T-cell (primary cell): ENCODE measurements at regions of chr15 and their contacts with region 1.

Region 1: DNA sequence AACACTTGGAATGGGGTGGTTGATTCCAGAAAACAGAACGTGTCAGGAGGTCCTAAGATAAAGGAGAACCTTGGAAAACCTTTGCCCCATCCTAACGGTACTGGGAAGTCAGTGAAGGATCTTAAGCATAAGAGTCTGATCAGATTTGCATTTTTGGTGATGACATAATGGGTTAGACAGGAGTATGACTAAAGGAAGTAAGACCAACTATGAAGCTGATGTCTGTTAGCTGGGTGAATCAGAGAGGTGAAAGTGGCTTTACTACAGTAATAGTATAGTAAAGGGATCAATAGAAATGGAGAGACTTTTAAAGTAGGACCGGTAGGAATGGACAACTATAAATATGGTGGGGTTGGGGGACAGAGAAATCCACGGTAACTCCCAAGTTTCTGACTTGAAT is 12.6 kb downstream of the GTF2A2 start:
- DNase-seq: no peak
- ATAC-seq: no peak
- H3K4me3 ChIP-seq: no peak overlapping the region
- H3K4me3 Mint-ChIP-seq: no peak overlapping the region
- H3K27ac ChIP-seq: no peak overlapping the region
- H3K27ac Mint-ChIP-seq: no peak overlapping the region
- H3K4me1 ChIP-seq: no peaks in the 10 kb centered on the region
- H3K4me1 Mint-ChIP-seq: peaks cover 0 to 3% (median 1%) of the 10 kb centered on the region in 3 donors
- H3K27me3 ChIP-seq: no peaks in the 10 kb centered on the region
- H3K27me3 Mint-ChIP-seq: no peaks in the 10 kb centered on the region

Region 2: GRCh38 chr15:58918239-58918638 is 726.5 kb before region 1 on chr15:
- CTCF ChIA-PET with region 1: no interaction called
- POLR2A ChIA-PET with region 1: interaction called in 1 of 2 experiments, 12 read pairs
- DNase-seq: no peak
- ATAC-seq: no peak
- H3K4me3 ChIP-seq: no peak overlapping the region
- H3K4me3 Mint-ChIP-seq: no peak overlapping the region
- H3K27ac ChIP-seq: no peak overlapping the region
- H3K27ac Mint-ChIP-seq: no peak overlapping the region
- H3K4me1 ChIP-seq: peaks cover under 1 to 16% of the 10 kb centered on the region in 2 experiments
- H3K4me1 Mint-ChIP-seq: peaks cover 22 to 49% (median 38%) of the 10 kb centered on the region in 3 donors
- H3K27me3 ChIP-seq: no peaks in the 10 kb centered on the region
- H3K27me3 Mint-ChIP-seq: no peaks in the 10 kb centered on the region

Region 3: DNA sequence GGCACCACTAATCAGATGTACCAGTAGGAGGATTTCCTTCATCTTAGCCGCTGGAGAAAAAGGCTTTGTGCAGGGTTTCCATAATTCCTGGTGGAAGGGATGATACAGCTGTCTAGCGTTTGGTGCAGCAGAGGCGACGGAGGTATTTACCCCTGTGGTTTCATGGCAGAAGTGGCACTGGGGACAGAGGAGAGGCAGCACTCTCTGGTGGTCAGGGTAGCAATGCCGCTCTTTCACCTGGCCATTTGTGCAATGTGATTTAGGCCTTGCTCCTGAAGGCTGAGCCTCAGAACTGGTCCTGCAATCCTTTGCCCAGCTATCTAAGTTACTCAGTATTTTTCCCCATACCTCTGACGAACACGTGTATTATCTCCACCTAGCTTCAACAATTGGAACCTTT is 91.4 kb after region 1 on chr15:
- CTCF ChIA-PET with region 1: no interaction called
- POLR2A ChIA-PET with region 1: no interaction called
- DNase-seq: peak in 5 of 35 experiments; percentile 3 to 24 (median 18)
- ATAC-seq: peak in 1 of 4 experiments; percentile 35
- H3K4me3 ChIP-seq: no peak overlapping the region
- H3K4me3 Mint-ChIP-seq: no peak overlapping the region
- H3K27ac ChIP-seq: no peak overlapping the region
- H3K27ac Mint-ChIP-seq: no peak overlapping the region
- H3K4me1 ChIP-seq: no peaks in the 10 kb centered on the region
- H3K4me1 Mint-ChIP-seq: no peaks in the 10 kb centered on the region
- H3K27me3 ChIP-seq: peaks cover 0 to 10% of the 10 kb centered on the region in 2 experiments
- H3K27me3 Mint-ChIP-seq: peaks cover 4 to 5% of the 10 kb centered on the region in 2 donors